HepG2 (cell line): ENCODE measurements at regions of chr5 and their contacts with region 1.

Region 1: DNA sequence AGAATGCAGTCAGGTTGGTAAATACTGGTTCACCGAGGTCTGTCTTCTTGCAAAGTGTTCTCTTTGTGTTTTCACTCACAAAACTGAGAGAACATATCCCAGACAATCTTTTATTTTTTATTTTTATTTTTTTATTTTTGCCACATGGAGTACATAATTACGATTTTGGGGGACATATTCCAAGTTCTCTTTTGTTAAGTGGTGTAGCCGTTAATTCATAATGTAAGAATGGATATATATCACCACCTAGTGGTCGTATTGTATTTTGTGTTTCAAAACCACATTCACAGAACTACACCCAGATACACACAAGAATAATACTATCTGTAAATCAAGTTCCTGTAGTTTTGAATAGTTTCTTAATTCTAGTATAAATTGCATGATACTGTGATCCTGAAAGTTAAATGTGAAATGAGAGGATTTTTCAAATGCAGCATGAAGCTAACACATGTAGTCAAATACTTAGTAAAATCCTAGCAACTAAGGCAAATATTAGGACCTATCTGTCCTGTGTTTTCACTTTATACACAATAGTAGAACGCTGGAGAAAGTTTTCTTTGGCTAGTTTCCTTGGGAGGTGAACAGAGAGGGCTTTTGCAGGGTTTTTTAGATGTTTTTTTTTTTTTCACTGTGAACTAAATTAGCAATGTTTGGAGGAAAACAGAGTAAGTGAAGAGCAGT is 92.7 kb downstream of the VCAN start:
- DNase-seq: peak; percentile 50
- ATAC-seq: peak; percentile 69
- H3K4me3 ChIP-seq: peak overlapping the region in 1 of 3 experiments; percentile 7; a peak in 1 of 6 replicates
- H3K27ac ChIP-seq: no peak overlapping the region
- H3K4me1 ChIP-seq: peaks cover 22% of the 10 kb centered on the region
- H3K27me3 ChIP-seq: peaks cover 0 to 4% of the 10 kb centered on the region in 2 experiments; a peak in 1 of 5 replicates
- CTCF ChIP-seq: peak; percentile 65
- EP300 ChIP-seq: no peak
- POLR2A ChIP-seq: no peak
- RAD21 ChIP-seq: no peak

Region 2: GRCh38 chr5:82174128-82174918 is 1389.9 kb before region 1 on chr5:
- CTCF ChIA-PET with region 1: interaction called, 3 read pairs
- POLR2A ChIA-PET with region 1: no interaction called
- in situ Hi-C with region 1: no loop called
- intact Hi-C with region 1: loop called (anchors 10 kb)
- DNase-seq: peak; percentile 55
- ATAC-seq: peak; percentile 88
- H3K4me3 ChIP-seq: no peak overlapping the region
- H3K27ac ChIP-seq: no peak overlapping the region
- H3K4me1 ChIP-seq: no peaks in the 10 kb centered on the region
- H3K27me3 ChIP-seq: no peaks in the 10 kb centered on the region
- CTCF ChIP-seq: peak; percentile 62
- EP300 ChIP-seq: no peak
- POLR2A ChIP-seq: no peak
- RAD21 ChIP-seq: peak; percentile 39; the same call in 1 of the 2 replicates

Region 3: DNA sequence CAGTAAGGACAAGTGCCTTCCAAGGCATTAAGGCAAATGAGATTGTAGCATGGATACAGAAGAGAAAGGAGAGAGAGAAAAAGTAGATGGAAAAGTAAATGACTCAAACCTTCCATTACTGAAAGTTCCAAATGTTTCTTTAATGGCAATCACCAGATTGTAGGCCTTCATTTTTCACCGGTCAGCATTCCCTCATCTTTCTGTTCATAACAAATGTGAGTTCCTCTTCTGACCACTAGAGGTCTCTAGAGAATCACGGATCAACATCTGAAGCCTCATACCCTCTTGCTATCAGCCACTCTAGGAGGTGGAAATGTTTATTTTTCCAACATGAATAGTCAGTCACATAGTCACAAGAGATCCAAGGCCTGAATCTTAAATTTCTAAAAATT is 1212.5 kb before region 1 on chr5:
- CTCF ChIA-PET with region 1: no interaction called
- POLR2A ChIA-PET with region 1: no interaction called
- in situ Hi-C with region 1: loop called (anchors 5 kb)
- intact Hi-C with region 1: loop called (anchors 5 kb)
- DNase-seq: peak; percentile 73
- ATAC-seq: peak; percentile 88
- H3K4me3 ChIP-seq: no peak overlapping the region
- H3K27ac ChIP-seq: no peak overlapping the region
- H3K4me1 ChIP-seq: peaks cover 22% of the 10 kb centered on the region
- H3K27me3 ChIP-seq: peaks cover 0 to 7% of the 10 kb centered on the region in 2 experiments; a peak in 1 of 5 replicates
- CTCF ChIP-seq: peak; percentile 88
- EP300 ChIP-seq: no peak; a peak in 1 of 4 replicates
- POLR2A ChIP-seq: no peak
- RAD21 ChIP-seq: peak; percentile 72

Region 4: GRCh38 chr5:82799361-82800080 is 764.7 kb before region 1 on chr5:
- CTCF ChIA-PET with region 1: no interaction called
- POLR2A ChIA-PET with region 1: no interaction called
- in situ Hi-C with region 1: no loop called
- intact Hi-C with region 1: loop called (anchors 5 kb)
- DNase-seq: peak; percentile 3
- ATAC-seq: peak; percentile 48; the same call in 1 of the 3 replicates
- H3K4me3 ChIP-seq: no peak overlapping the region
- H3K27ac ChIP-seq: no peak overlapping the region
- H3K4me1 ChIP-seq: no peaks in the 10 kb centered on the region
- H3K27me3 ChIP-seq: 0 out of 5 replicates have a peak, but pooled peaks cover 0 to 5% of the 10 kb centered on the region in 2 experiments
- CTCF ChIP-seq: no peak
- EP300 ChIP-seq: no peak
- POLR2A ChIP-seq: no peak
- RAD21 ChIP-seq: no peak

Region 5: GRCh38 chr5:83076742-83077661 is 487.2 kb before region 1 on chr5 and contains the starts of genes TMEM167A and XRCC4:
- CTCF ChIA-PET with region 1: no interaction called
- POLR2A ChIA-PET with region 1: no interaction called
- in situ Hi-C with region 1: loop called (anchors 25 kb)
- intact Hi-C with region 1: loop called (anchors 5 kb)
- DNase-seq: peak; percentile 99
- ATAC-seq: peak; percentile 99
- H3K4me3 ChIP-seq: peak within 1 kb of the TSS; percentile 83 to 94 (median 90)
- H3K27ac ChIP-seq: peak within 1 kb of the TSS; percentile 94
- H3K4me1 ChIP-seq: peaks cover 49% of the 10 kb centered on the region
- H3K27me3 ChIP-seq: no peaks in the 10 kb centered on the region; a peak in 1 of 5 replicates
- CTCF ChIP-seq: no peak
- EP300 ChIP-seq: no peak
- POLR2A ChIP-seq: peak; percentile 92 to 98
- RAD21 ChIP-seq: peak; percentile 41; the same call in 1 of the 2 replicates
- total RNA-seq, gene TMEM167A: 78.7 and 122 TPM in 2 replicates
- total RNA-seq, gene XRCC4: 12.6 and 21.8 TPM in 2 replicates

Region 6: GRCh38 chr5:83473346-83474163 is 90.7 kb before region 1 on chr5:
- CTCF ChIA-PET with region 1: interaction called, 3 read pairs
- POLR2A ChIA-PET with region 1: interaction called, 13 read pairs
- in situ Hi-C with region 1: no loop called
- intact Hi-C with region 1: loop called (anchors 2 kb)
- DNase-seq: no peak
- ATAC-seq: peak; percentile 67
- H3K4me3 ChIP-seq: peak overlapping the region; percentile 36 to 68 (median 46); a peak in 5 of 6 replicates
- H3K27ac ChIP-seq: no peak overlapping the region
- H3K4me1 ChIP-seq: peaks cover 71% of the 10 kb centered on the region
- H3K27me3 ChIP-seq: peaks cover 3 to 43% of the 10 kb centered on the region in 2 experiments; a peak in 4 of 5 replicates
- CTCF ChIP-seq: peak; percentile 80
- EP300 ChIP-seq: no peak
- POLR2A ChIP-seq: no peak
- RAD21 ChIP-seq: peak; percentile 57; the same call in 1 of the 2 replicates